ENCODE measurements at regions of chr9 and their contacts with region 1.

Region 1: DNA sequence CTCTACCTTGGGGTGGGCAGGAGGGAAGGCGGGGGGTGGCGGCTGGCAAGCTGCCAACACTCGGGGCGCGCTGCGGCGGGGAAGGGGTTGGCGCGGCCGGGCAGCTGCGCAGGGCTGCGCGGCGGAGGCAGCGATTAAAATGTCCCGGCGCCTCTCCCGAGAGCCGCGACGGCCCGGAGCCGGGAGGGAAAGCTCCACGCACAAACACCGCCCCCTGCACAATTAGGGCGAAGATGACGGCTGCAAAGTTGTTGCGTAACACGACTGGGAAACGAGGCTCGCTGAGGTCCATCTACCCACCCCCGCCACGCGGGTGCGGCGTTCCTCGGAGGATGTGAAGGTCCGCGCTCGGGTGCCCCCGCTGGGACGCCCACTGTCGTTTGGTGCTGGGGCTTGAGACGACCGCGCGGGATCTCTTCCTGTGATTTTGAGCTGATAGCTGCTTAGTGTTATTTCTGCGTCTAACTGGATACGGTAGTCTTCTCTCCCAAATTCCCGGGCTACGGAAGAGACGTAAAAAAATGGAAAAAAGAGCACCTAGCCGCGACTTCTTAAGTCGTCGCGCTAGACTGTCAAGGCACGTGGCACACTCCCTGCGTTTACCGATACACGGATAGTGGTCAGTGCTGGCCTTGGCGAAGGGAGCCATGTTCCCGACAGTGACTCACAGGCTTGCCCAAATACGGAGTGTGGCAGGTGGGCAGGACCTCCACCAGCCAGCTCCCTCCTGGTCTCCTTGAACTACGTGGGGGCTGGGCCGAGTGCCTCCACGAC is 958 bp upstream of the NFIL3 start:
- DNase-seq: peak; percentile 58
- H3K4me3 ChIP-seq: peak overlapping the region; percentile 70
- CTCF ChIP-seq: no peak

Region 2: GRCh38 chr9:91361291-91362050 is 63.1 kb before region 1 on chr9 and contains the start of gene AUH:
- in situ Hi-C with region 1: no loop called
- DNase-seq: peak; percentile 26
- H3K4me3 ChIP-seq: peak within 1 kb of the TSS; percentile 91
- CTCF ChIP-seq: no peak

Region 3: GRCh38 chr9:91474656-91475055 is 50.1 kb after region 1 on chr9:
- in situ Hi-C with region 1: no loop called
- DNase-seq: no peak
- H3K4me3 ChIP-seq: no peak overlapping the region
- CTCF ChIP-seq: no peak

Region 4: GRCh38 chr9:91659529-91660495 is 235.2 kb after region 1 on chr9:
- in situ Hi-C with region 1: loop called (anchors 25 kb)
- DNase-seq: peak; percentile 8
- H3K4me3 ChIP-seq: no peak overlapping the region
- CTCF ChIP-seq: peak; percentile 79

Measured in astrocyte of the cerebellum (primary cell).